ENCODE measurements at regions of chr11 and their contacts with region 1.

Region 1: GRCh38 chr11:75384438-75385080 is 14.8 kb upstream of the RPS3 start:
- DNase-seq: peak; percentile 96
- H3K4me3 ChIP-seq: no peak overlapping the region
- H3K27ac ChIP-seq: no peak overlapping the region
- H3K4me1 ChIP-seq: peaks cover 3 to 54% (median 33%) of the 10 kb centered on the region in 6 donors
- H3K27me3 ChIP-seq: peaks cover 0 to 4% (median 0%) of the 10 kb centered on the region in 7 donors
- CTCF ChIP-seq: peak; percentile 89 to 98 (median 95)
- POLR2A ChIP-seq: no peak

Region 2: GRCh38 chr11:75280227-75280701 is 104.3 kb before region 1 on chr11:
- intact Hi-C with region 1: loop called (anchors 2 kb)
- DNase-seq: peak; percentile 90
- H3K4me3 ChIP-seq: no peak overlapping the region
- H3K27ac ChIP-seq: peak overlapping the region in 7 of 8 donors; percentile 30 to 88 (median 63)
- H3K4me1 ChIP-seq: peaks cover 0 to 57% (median 38%) of the 10 kb centered on the region in 6 donors
- H3K27me3 ChIP-seq: no peaks in the 10 kb centered on the region
- CTCF ChIP-seq: peak; percentile 95 to 99 (median 98)
- POLR2A ChIP-seq: no peak

Region 3: GRCh38 chr11:75330286-75330685 is 54.3 kb before region 1 on chr11:
- intact Hi-C with region 1: loop called (anchors 5 kb)
- DNase-seq: no peak
- H3K4me3 ChIP-seq: no peak overlapping the region
- H3K27ac ChIP-seq: peak overlapping the region in 4 of 8 donors; percentile 25 to 72 (median 60)
- H3K4me1 ChIP-seq: peaks cover 31 to 84% (median 63%) of the 10 kb centered on the region in 6 donors
- H3K27me3 ChIP-seq: no peaks in the 10 kb centered on the region
- CTCF ChIP-seq: no peak
- POLR2A ChIP-seq: no peak